HepG2 (cell line): ENCODE measurements at regions of chr5 and their contacts with region 1.

Region 1: GRCh38 chr5:52948418-52949076 is 40.6 kb upstream of the ITGA2 start:
- DNase-seq: peak; percentile 82
- ATAC-seq: peak; percentile 99
- H3K4me3 ChIP-seq: no peak overlapping the region
- H3K27ac ChIP-seq: no peak overlapping the region
- H3K4me1 ChIP-seq: peaks cover 9% of the 10 kb centered on the region
- H3K27me3 ChIP-seq: no peaks in the 10 kb centered on the region
- CTCF ChIP-seq: peak; percentile 87
- EP300 ChIP-seq: no peak
- POLR2A ChIP-seq: no peak
- RAD21 ChIP-seq: peak; percentile 91

Region 2: GRCh38 chr5:53095931-53096525 is 147.5 kb after region 1 on chr5:
- CTCF ChIA-PET with region 1: interaction called, 19 read pairs
- POLR2A ChIA-PET with region 1: interaction called, 3 read pairs
- in situ Hi-C with region 1: loop called (anchors 5 kb)
- intact Hi-C with region 1: loop called (anchors 1 kb)
- DNase-seq: peak; percentile 56
- ATAC-seq: peak; percentile 31
- H3K4me3 ChIP-seq: no peak overlapping the region
- H3K27ac ChIP-seq: no peak overlapping the region
- H3K4me1 ChIP-seq: peaks cover 27% of the 10 kb centered on the region
- H3K27me3 ChIP-seq: no peaks in the 10 kb centered on the region
- CTCF ChIP-seq: peak; percentile 78
- EP300 ChIP-seq: no peak
- POLR2A ChIP-seq: no peak
- RAD21 ChIP-seq: 0 out of 2 replicates have a peak, but pooled peaks have one; percentile 13